ENCODE measurements at regions of chr18 and their contacts with region 1.

Region 1: GRCh38 chr18:3572761-3573160 is 122.8 kb downstream of the TGIF1 start:
- DNase-seq: no peak
- ATAC-seq: no peak
- H3K4me3 ChIP-seq: no peak overlapping the region
- H3K27ac ChIP-seq: no peak overlapping the region
- H3K4me1 ChIP-seq: no peaks in the 10 kb centered on the region
- H3K27me3 ChIP-seq: no peaks in the 10 kb centered on the region
- CTCF ChIP-seq: no peak

Region 2: GRCh38 chr18:3481696-3482210 is 91.0 kb before region 1 on chr18:
- intact Hi-C with region 1: loop called in 1 of 10 experiments (anchors 5 kb)
- DNase-seq: no peak
- ATAC-seq: peak in 4 of 8 donors; percentile 35 to 54 (median 51)
- H3K4me3 ChIP-seq: no peak overlapping the region
- H3K27ac ChIP-seq: no peak overlapping the region
- H3K4me1 ChIP-seq: no peaks in the 10 kb centered on the region
- H3K27me3 ChIP-seq: peaks cover 0 to 9% (median 0%) of the 10 kb centered on the region in 7 donors
- CTCF ChIP-seq: peak in 7 of 9 donors; percentile 24 to 57 (median 48)

Measured in heart right ventricle (tissue), 16 donors.